Motor neuron (in vitro differentiated cells): ENCODE measurements at regions of chr11 and their contacts with region 1.

Region 1: DNA sequence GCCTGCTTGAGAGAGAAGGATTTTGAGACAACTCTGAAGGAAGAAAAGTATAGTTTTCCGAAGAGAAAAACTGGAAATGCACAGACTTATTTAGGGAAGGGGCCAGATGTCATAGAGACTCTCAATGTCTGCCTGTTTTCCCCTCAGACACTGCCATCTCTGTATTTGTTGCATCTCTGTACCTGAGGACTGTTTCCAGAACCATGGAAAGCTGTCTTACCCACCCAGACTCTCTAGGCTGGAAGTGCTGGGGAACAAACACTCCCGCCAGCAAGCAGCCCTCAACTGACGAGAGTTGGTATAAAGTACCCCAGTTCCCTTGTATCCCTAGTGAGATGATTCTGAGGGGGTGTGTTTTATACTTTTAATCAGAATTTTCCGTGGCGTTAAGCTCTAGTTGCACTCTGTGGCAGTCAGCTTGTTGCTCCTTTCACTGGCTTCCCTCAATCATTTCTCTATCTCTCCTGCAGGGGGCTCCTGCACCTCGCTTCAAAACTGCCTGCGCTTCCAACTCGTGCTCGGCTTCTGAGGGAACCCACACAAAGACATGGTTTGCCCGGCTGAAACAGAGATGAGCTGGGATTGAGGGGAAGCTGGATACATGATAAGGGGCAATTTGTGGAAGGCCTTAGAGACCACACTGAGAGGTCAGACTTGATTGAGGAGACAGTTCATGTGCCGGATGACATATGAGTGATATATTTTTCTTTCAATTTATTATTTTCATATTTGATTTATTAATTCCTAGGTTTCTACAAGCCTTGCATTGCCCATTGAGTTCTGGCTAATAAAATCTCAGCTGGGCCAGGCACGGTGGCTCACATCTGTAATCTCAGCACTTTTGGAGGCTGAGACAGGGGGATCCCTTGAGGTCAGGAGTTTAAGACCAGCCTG is 36.9 kb upstream of the CLPB start:
- ATAC-seq: peak; percentile 80 to 96 (median 91)
- H3K4me3 ChIP-seq: no peak overlapping the region
- H3K27ac ChIP-seq: no peak overlapping the region
- H3K4me1 ChIP-seq: peaks cover 9 to 11% of the 10 kb centered on the region in 2 donors

Region 2: DNA sequence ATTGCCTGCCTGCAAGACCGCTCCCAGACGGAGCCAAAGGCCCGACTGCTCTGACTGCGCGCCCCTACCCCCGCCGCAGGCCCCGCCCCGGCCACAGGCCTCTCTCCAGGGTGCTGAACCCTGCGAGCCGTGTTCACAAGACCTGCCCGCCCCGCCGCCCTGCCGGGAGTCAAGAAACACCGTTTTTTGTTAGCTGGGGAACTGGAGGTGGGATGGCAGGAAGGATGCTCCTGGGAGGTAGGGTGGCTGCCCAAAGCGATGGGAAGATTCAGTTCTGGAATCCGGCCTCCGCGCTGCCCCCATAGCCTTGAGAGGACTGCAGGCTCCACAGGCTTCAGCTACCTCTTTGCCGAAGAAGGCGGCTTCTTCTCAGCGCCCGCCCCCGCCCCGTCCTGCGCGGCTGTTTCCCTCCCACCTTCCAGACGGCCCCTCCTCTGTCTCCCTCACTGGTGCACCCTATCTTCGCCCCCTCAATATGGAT is 205.6 kb after region 1 on chr11:
- in situ Hi-C with region 1: loop called in 4 of 9 experiments (anchors 10 to 25 kb)
- ATAC-seq: peak; percentile 24 to 85 (median 41)
- H3K4me3 ChIP-seq: no peak overlapping the region
- H3K27ac ChIP-seq: no peak overlapping the region
- H3K4me1 ChIP-seq: peaks cover 41 to 53% of the 10 kb centered on the region in 2 donors

Region 3: DNA sequence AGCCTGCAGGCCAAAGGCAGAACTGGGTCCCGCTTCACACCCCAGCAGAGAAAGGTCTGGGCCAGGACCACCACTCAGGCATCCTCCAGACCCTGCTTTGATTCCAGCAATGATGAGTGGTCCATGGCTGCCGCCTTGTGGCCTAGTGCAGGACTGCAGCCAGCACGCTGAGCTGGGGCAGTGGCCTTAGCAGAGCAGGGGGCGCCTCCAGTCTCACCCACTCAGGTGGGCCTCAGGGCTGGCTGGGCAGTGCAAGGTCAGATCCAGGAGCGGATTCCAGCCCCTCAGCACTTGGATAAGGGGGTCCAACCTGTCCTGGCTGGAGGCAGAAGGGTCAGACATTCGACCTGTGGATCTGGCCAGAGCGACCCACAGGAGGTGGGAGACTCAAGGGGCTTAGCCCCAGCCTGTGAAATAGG is 212.5 kb after region 1 on chr11:
- in situ Hi-C with region 1: loop called in 4 of 9 experiments (anchors 10 to 25 kb)
- ATAC-seq: peak; percentile 2 to 75 (median 68)
- H3K4me3 ChIP-seq: no peak overlapping the region
- H3K27ac ChIP-seq: no peak overlapping the region
- H3K4me1 ChIP-seq: peaks cover 14 to 25% of the 10 kb centered on the region in 2 donors

Region 4: DNA sequence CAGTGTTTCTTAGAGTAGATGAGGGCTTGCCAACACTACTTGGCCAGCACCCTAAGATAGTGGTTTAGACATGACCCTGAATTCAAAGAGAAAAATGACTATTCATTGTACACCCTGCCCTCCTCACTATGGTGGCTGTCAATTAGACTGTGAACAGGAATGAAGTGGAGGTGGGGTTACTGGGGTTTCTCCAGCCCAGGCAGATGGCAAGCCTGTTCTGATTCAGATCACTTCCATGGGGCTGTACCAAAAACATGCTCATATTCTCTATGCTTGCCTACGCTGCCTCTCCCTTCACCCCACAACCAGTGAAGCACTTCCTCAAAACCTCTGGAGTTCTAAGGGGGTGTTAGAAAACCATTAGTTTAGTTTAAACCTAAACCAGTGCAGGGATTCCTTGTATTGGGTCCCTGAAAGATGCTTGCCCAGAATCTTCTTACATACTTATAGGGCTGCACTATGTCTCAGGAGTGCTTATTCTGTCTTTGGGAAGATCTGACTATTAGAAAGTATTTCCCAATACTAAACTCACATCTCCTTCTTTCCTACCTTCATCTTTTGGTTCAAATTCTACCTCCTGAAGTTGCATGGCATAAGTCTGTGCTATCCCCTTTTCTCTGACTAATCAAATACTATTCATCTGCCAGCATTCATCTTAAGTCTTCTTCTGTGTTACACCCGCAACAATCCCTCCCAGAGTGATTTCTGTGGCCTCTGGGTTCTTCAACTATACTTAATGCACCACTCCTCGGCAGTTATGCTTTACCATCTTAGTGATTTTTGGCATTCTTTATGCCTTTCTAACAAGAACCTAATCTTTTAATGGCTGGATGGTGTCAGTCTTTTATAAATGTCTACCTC is 414.7 kb after region 1 on chr11:
- in situ Hi-C with region 1: no loop called
- ATAC-seq: peak in 3 of 8 experiments; percentile 36 to 89 (median 80)
- H3K4me3 ChIP-seq: no peak overlapping the region
- H3K27ac ChIP-seq: no peak overlapping the region
- H3K4me1 ChIP-seq: no peaks in the 10 kb centered on the region